Panc1 (cell line): ENCODE measurements at regions of chr9 and their contacts with region 1.

Region 1: GRCh38 chr9:34386656-34387055 is 10.0 kb upstream of the MYORG start:
- DNase-seq: no peak
- ATAC-seq: no peak
- H3K4me3 ChIP-seq: no peak overlapping the region
- H3K27ac ChIP-seq: no peak overlapping the region
- H3K4me1 ChIP-seq: no peaks in the 10 kb centered on the region
- H3K27me3 ChIP-seq: no peaks in the 10 kb centered on the region
- CTCF ChIP-seq: no peak

Region 2: DNA sequence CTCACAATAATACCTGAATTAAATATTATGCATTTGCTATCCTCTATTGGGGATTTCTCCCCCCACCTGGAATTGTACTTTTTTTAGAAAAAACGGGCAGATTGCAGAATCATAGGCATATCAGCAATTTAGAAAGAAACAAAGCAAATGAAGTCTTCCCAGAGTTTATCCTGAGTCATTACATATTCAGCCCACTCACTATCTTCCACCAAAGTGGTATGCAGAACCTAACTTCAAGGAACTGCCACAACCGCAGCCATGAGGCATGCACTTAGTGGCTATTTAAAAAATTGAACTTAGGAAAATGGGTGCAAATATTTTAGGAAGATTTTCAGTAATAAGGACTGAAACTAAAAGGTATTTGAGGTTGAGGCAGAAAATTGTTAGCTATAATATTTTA is 159.2 kb before region 1 on chr9:
- CTCF ChIA-PET with region 1: no interaction called
- POLR2A ChIA-PET with region 1: interaction called, 11 read pairs
- in situ Hi-C with region 1: no loop called
- intact Hi-C with region 1: no loop called
- DNase-seq: no peak
- ATAC-seq: no peak
- H3K4me3 ChIP-seq: no peak overlapping the region
- H3K27ac ChIP-seq: no peak overlapping the region
- H3K4me1 ChIP-seq: peaks cover 3% of the 10 kb centered on the region; the same call in 1 of the 2 replicates
- H3K27me3 ChIP-seq: no peaks in the 10 kb centered on the region
- CTCF ChIP-seq: no peak